Lower leg skin (tissue), 4 donors: ENCODE measurements at regions of chr7 and their contacts with region 1.

Region 1: DNA sequence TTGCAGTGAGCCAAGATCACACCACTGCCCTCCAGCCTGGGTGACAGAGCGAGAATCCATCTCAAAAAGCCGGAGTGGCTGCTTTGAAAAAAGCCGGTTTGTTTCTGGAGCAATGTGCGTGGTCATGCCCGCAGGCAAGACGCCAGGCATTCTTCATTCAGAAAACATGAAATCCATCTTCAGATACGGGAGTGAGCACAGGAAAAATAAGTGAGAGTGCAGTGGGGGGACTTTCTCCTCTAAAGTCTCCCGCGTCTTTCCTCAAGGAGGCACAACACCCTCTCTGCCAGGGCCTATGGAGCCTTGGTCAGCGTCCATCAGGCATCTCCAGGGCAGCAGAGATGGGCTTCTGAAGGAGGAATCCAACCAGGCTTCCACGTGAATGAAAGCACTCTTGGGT is 62.3 kb upstream of the DGKI start:
- DNase-seq: no peak
- H3K4me3 ChIP-seq: no peak overlapping the region
- CTCF ChIP-seq: no peak
- POLR2A ChIP-seq: no peak

Region 2: GRCh38 chr7:138004046-138004445 is 95.0 kb after region 1 on chr7:
- intact Hi-C with region 1: loop called (anchors 2 kb)
- DNase-seq: no peak
- H3K4me3 ChIP-seq: no peak overlapping the region
- CTCF ChIP-seq: no peak
- POLR2A ChIP-seq: no peak